AG04449 (cell line): ENCODE measurements at regions of chr9 and their contacts with region 1.

Region 1: GRCh38 chr9:87290241-87291052 is 207.2 kb upstream of the DAPK1 start:
- DNase-seq: peak; percentile 94
- H3K4me3 ChIP-seq: no peak overlapping the region
- CTCF ChIP-seq: peak; percentile 54

Region 2: DNA sequence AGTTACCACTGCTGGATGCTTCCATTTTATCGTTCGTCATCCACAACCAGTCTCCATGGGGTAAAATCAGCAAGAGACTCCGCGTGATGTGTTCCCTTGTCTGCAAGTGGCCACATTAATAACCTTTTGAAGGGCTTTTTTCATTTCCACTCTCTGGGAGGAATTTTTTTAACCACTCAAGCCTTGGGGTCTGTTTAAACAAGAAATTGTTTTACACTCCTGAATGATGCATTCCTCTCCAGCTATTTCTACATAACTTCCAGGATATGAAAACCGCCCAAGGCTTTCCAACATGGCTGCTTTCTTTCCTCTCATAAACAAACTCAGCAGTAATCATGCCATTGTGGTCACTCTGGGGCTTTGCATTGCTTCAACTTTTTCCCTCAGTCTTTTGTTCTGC is 10.0 kb before region 1 on chr9:
- CTCF ChIA-PET with region 1: interaction called, 7 read pairs
- POLR2A ChIA-PET with region 1: interaction called, 13 read pairs
- DNase-seq: peak; percentile 100
- H3K4me3 ChIP-seq: no peak overlapping the region
- CTCF ChIP-seq: no peak